WTC11 (cell line): ENCODE measurements at regions of chr19 and their contacts with region 1.

Region 1: DNA sequence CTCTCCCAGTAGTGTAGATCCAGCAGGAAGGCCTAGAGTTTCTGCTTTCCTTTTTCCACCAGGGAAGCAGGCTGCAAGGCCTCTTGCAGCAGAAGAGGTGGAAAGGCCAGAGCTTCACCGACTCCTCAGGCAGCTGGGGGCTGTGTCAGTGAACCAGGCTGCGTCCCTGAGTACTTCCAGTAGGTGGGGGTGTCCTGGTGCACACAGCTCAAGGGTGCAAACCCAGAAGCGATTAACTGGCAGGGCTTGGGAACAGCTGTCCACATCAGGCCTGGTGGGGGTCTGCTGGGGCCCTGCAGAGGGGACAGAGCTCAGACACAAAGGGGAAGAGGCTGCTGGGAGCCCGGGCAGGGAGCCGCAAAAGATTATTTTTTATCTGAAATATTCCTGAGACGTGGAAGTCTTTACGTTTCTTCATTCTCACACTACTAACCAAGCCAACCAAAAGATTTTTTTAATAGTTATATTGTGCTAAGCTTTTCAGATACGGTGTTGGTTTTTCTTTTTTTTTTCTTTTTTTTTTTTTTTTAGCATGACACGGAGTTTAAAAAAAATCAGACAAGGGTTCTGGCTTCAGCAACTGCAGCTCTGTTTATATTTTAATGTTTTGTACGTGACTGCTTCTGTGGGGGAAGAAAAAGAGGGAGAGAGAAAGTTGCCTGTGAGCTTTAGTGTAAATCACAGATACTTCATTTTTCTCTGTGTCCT is 11.0 kb downstream of the TSHZ3 start:
- DNase-seq: peak; percentile 79
- ATAC-seq: peak; percentile 89
- H3K4me3 Mint-ChIP-seq: peak overlapping the region; percentile 27; the same call in 1 of the 2 replicates
- H3K27ac Mint-ChIP-seq: peak overlapping the region; percentile 4
- H3K4me1 Mint-ChIP-seq: peaks cover 89% of the 10 kb centered on the region
- H3K27me3 Mint-ChIP-seq: no peaks in the 10 kb centered on the region
- CTCF ChIP-seq: peak; percentile 56

Region 2: GRCh38 chr19:31306006-31306753 is 32.0 kb before region 1 on chr19:
- CTCF ChIA-PET with region 1: no interaction called
- POLR2A ChIA-PET with region 1: no interaction called
- DNase-seq: no peak
- ATAC-seq: no peak
- H3K4me3 Mint-ChIP-seq: no peak overlapping the region
- H3K27ac Mint-ChIP-seq: no peak overlapping the region
- H3K4me1 Mint-ChIP-seq: peaks cover 31% of the 10 kb centered on the region
- H3K27me3 Mint-ChIP-seq: no peaks in the 10 kb centered on the region
- CTCF ChIP-seq: no peak

Region 3: DNA sequence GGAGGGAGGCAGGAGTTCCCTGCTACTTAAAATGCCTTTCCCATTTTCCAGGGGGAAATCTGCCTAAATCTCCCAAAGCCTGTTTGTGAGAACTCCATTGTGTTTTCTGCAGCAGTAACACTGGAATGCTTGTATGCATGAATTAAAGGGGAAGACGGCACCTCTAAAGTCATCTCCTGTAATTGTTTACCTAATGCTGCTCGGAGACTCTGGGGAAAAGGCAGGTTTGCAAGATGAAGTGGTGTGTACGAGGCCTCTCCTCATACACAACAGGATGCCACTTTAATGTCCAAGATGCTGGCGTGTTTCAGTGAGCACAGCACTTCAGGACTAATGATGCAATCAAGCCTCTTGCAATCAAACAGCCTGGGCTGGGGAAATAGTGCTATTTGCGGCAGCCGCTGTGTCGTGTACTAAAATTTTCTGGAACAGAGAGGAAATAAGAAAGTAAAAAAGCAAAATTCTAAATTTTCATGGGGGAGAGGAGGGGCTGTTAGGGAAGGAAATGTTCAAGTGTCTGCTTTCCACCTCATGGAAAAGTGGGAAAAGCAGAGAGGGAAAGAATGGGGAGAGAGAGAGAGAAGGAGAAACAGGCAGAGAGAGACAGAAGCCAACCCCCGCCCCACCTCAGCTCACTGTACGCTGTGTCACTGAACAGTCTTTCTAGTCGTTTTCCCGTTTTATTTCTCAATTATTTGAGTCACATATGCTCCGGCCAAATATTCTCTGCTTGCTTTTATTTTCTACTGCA is 21.8 kb before region 1 on chr19:
- CTCF ChIA-PET with region 1: interaction called, 26 read pairs
- POLR2A ChIA-PET with region 1: interaction called, 4 read pairs
- DNase-seq: no peak
- ATAC-seq: peak; percentile 43
- H3K4me3 Mint-ChIP-seq: peak overlapping the region; percentile 32
- H3K27ac Mint-ChIP-seq: peak overlapping the region; percentile 87
- H3K4me1 Mint-ChIP-seq: peaks cover 77% of the 10 kb centered on the region
- H3K27me3 Mint-ChIP-seq: no peaks in the 10 kb centered on the region
- CTCF ChIP-seq: no peak

Region 4: DNA sequence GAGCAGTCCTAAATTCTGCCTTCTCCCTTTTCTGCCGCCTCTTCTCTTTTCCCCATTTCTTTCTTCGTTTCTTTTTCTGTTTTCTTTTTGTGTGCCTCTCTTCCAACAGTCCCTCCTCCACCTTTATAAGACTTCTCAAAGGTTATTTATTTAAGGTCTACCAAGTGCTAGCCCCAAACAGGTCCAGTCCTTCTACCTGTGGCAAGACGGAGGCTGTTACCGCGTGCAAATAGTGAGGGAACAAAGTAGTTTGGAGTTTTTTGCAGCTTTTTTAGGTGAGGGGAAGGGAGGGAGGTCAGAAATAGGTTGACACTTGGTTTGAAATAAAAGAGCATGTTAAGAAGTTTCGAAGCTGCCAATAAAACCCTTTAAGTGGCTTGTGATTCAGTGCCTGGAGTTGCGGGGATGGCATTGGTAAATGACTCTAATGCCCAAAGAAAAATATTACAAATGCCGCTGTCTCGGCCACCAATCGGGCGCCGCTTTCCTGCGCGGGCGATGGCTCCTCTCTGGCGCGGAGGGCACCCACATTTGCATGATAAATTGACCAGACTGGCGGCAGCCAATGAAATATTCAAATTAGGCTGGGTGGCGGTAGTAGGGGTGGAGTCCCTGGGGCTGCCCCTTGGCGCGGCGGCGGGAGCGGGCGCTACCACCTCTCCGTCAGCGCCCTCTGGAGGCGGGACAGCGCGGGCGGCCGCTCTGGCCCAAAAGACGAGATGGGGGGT is 18.5 kb after region 1 on chr19:
- CTCF ChIA-PET with region 1: interaction called, 34 read pairs
- POLR2A ChIA-PET with region 1: no interaction called
- DNase-seq: peak; percentile 84
- ATAC-seq: peak; percentile 48
- H3K4me3 Mint-ChIP-seq: peak overlapping the region; percentile 97
- H3K27ac Mint-ChIP-seq: no peak overlapping the region; the same call in 1 of the 2 replicates
- H3K4me1 Mint-ChIP-seq: peaks cover 83% of the 10 kb centered on the region
- H3K27me3 Mint-ChIP-seq: peaks cover 51% of the 10 kb centered on the region
- CTCF ChIP-seq: peak; percentile 51; the same call in 1 of the 2 replicates